ENCODE measurements at regions of chrX and their contacts with region 1.

Region 1: GRCh38 chrX:102768987-102769761 is 48.6 kb downstream of the GPRASP3 start:
- DNase-seq: peak; percentile 78
- H3K4me3 Mint-ChIP-seq: peak overlapping the region; percentile 92
- H3K27ac Mint-ChIP-seq: peak overlapping the region; percentile 96
- H3K4me1 Mint-ChIP-seq: peaks cover 12% of the 10 kb centered on the region
- H3K27me3 Mint-ChIP-seq: no peaks in the 10 kb centered on the region

Region 2: GRCh38 chrX:101617211-101618191 is 1151.7 kb before region 1 on chrX and contains the start of gene ARMCX6:
- intact Hi-C with region 1: loop called (anchors 5 kb)
- DNase-seq: peak; percentile 68
- H3K4me3 Mint-ChIP-seq: peak within 1 kb of the TSS; percentile 93
- H3K27ac Mint-ChIP-seq: peak within 1 kb of the TSS; percentile 92
- H3K4me1 Mint-ChIP-seq: peaks cover 46% of the 10 kb centered on the region
- H3K27me3 Mint-ChIP-seq: no peaks in the 10 kb centered on the region
- total RNA-seq, gene ARMCX6: 79.3 and 83.5 TPM in 2 replicates

Region 3: DNA sequence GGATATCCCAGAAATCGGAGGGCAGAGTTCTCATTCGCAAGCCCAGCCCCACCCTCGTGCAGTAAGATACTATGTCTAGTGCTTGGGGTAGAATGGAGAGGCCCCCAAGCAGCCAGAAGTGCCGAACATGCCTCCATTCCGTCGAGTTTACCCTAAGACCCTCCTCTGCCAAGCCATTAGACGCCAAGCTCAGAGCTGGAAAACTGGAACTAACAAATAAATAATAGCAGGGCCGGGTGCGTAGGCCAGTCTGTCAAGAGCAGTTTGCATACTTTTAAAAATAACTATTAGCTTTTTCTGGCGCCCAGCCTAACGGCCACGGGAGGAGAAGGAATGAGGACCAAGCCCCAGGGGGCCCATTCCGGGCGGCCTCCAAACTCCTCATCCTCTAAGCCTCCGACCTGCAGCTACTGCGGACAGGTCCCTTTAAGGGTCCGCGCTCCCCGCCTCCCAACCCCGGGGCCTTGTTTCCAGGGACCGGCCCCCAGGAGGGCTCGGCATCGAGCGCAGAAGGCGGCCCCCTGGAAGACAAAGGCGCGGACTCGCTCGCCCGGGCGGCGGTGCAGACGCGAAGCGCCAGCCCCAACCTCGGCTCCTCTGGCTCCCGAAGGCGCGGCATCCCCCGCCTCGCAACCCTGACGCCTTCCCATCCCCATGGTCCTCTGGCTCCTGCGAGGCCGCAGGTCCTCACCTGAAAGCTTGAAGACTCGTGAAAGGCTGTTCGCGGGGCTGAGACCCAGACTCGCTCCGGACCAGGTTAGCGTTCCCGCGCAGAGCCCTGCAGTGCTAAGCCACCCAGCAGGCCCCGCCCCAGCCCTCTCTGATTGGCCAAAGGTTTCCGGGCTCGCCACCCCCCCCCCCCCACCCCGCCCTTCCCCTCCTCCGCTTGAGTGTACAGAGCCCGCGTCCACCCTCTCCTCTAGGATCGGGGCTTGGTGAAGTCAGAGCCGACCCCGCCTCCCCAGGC is 252.9 kb before region 1 on chrX and contains the start of gene TMSB15A:
- intact Hi-C with region 1: loop called (anchors 10 kb)
- DNase-seq: peak; percentile 8
- H3K4me3 Mint-ChIP-seq: peak within 1 kb of the TSS; percentile 77
- H3K27ac Mint-ChIP-seq: no peak within 1 kb of the TSS
- H3K4me1 Mint-ChIP-seq: peaks cover 16% of the 10 kb centered on the region
- H3K27me3 Mint-ChIP-seq: peaks cover 23% of the 10 kb centered on the region
- total RNA-seq, gene TMSB15A: not detected in 2 replicates

Region 4: GRCh38 chrX:102659790-102660757 is 109.1 kb before region 1 on chrX:
- intact Hi-C with region 1: loop called (anchors 2 kb)
- DNase-seq: peak; percentile 68
- H3K4me3 Mint-ChIP-seq: peak overlapping the region; percentile 92
- H3K27ac Mint-ChIP-seq: peak overlapping the region; percentile 76
- H3K4me1 Mint-ChIP-seq: peaks cover 8% of the 10 kb centered on the region
- H3K27me3 Mint-ChIP-seq: peaks cover 6% of the 10 kb centered on the region

Region 5: GRCh38 chrX:102720237-102721168 is 48.7 kb before region 1 on chrX and contains the start of gene GPRASP3:
- intact Hi-C with region 1: loop called (anchors 1 kb)
- DNase-seq: peak; percentile 56
- H3K4me3 Mint-ChIP-seq: peak within 1 kb of the TSS; percentile 88
- H3K27ac Mint-ChIP-seq: peak within 1 kb of the TSS; percentile 88
- H3K4me1 Mint-ChIP-seq: peaks cover 11% of the 10 kb centered on the region
- H3K27me3 Mint-ChIP-seq: no peaks in the 10 kb centered on the region
- total RNA-seq, gene GPRASP3: 0.65 and 0.88 TPM in 2 replicates

Measured in activated T-helper 1 cell treated with anti-CD3 and anti-CD28 coated beads, Interleukin-12 subunit alpha, Interleukin-12 subunit beta, Interleukin-2, Interleukin-4 antibody, amounts not matched to agents 30 ng/mL and 10 ng/mL and 1 ng/mL, durations not matched to agents 14 hours and 24 hours and 36 hours (primary cell).